ENCODE measurements at regions of chr5 and their contacts with region 1.

Region 1: DNA sequence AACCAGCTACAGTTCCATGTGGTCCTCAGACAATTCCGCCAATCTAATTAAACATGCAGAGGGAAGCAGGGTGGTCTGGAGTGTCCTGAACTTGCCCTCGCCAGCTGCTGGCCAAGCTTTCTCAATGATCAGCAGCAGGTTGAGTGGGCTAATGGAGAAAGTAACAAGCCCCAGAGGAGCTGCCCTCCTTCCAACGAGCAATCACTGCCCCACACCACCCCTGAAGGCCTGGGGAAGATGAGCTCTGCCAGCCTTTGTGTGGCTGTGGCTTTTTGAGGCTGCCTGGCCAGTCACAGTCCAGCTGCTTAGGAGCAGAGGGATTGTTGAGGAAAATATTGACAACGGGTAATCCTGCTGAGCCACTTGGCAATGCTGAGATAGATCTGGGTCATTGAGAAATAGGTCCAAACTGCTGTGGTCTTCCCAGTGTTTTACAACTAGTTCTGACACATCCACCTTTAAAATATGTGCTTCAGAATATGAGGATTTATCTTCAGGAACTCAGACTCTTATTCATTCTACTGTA is 107.3 kb downstream of the CD180 start:
- DNase-seq: no peak
- H3K4me3 ChIP-seq: no peak overlapping the region
- H3K27ac ChIP-seq: peak overlapping the region in 3 of 4 donors; percentile 25 to 62 (median 46)
- H3K4me1 ChIP-seq: peaks cover 7 to 23% (median 14%) of the 10 kb centered on the region in 4 donors
- H3K27me3 ChIP-seq: no peaks in the 10 kb centered on the region
- CTCF ChIP-seq: no peak
- EP300 ChIP-seq: no peak
- POLR2A ChIP-seq: no peak

Region 2: DNA sequence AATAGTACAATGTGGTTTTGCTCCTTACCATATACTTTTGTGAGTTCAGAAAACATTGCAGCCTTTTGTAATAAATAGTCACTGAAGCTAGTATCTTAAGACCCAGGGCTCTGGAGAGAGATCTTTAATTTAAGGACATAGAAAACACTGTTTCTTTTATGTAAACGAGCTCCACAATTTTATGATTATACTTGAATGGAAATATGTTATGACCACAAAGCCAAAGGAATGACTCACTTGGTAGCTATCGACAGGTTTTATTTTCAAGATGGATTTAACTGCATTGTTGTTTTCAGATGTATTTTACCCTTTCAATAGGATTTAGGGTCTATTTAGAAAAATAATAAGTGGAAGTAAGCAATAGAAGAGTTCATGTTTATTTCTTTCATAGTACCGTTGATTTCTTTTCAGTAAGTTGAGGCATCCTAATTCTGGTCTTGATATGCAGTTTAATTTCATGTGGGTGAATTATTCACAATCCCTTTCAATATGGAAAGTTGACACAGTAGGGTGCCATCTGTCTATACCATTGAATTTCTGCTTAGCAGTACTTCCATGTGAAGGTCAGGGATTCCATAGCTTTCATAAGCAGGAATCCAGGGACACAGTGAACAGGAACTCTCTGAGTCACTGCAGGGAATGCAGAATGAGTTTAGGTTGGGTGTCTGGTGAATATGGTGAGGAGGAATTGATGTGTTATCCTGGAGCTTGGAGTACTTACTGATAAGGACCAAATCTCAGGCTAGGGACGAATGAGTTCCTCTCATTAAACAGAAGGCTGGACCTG is 50.3 kb before region 1 on chr5:
- in situ Hi-C with region 1: loop called in 1 of 4 experiments (anchors 10 kb)
- intact Hi-C with region 1: no loop called
- DNase-seq: no peak
- H3K4me3 ChIP-seq: no peak overlapping the region
- H3K27ac ChIP-seq: peak overlapping the region in 1 of 4 donors; percentile 39
- H3K4me1 ChIP-seq: peaks cover 0 to 27% (median under 1%) of the 10 kb centered on the region in 4 donors
- H3K27me3 ChIP-seq: no peaks in the 10 kb centered on the region
- CTCF ChIP-seq: no peak
- EP300 ChIP-seq: no peak
- POLR2A ChIP-seq: no peak